Head of caudate nucleus (tissue), 42 donors: ENCODE measurements at regions of chr3 and their contacts with region 1.

Region 1: GRCh38 chr3:40452876-40453730 is 4.0 kb upstream of the RPL14 start:
- DNase-seq: peak; percentile 93 to 99 (median 98)

Region 2: DNA sequence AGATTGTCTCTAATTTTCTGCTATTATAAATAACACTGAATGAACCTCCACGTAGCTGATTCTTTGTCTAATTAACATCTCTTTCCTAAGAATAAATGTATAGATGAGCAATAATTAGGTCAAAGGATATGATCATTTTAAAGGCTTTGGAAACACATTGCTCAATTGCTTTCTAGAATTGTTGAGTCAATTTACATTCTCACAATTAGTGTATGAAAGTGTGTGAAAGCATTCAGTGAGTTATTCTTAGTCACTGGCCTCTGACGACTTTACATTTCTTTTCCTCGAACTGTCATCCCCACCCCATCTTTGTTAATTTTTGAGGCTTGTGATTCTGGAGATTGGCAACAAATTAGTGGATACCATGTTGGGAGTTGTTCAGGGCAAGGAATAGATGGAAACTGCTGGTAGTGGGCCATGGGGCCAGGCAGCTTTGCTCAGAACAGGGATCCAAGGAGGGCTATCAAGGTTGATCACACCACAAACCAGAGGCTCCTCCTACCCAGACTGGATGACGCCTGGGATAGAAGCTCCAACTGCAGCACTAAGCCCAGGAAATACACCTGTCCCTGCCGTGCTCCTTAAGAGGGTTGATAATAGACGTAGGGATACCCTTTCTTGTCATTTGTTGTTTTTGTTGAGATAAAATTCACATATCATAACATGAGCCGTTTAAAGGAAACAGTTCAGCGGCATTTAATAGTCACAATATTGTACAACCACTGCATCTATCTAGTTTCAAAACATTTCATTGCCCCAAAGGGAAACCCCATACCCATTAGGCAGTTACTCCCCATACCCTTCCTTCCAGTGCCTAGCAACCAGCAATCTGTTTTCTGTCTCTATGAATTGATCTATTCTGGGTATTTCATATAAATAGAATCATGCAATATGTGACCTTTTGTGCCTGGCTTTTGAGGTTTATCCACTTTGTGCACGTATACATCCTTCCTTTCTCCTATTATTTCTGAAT is 115.7 kb before region 1 on chr3:
- intact Hi-C with region 1: no loop called
- DNase-seq: no peak

Region 3: DNA sequence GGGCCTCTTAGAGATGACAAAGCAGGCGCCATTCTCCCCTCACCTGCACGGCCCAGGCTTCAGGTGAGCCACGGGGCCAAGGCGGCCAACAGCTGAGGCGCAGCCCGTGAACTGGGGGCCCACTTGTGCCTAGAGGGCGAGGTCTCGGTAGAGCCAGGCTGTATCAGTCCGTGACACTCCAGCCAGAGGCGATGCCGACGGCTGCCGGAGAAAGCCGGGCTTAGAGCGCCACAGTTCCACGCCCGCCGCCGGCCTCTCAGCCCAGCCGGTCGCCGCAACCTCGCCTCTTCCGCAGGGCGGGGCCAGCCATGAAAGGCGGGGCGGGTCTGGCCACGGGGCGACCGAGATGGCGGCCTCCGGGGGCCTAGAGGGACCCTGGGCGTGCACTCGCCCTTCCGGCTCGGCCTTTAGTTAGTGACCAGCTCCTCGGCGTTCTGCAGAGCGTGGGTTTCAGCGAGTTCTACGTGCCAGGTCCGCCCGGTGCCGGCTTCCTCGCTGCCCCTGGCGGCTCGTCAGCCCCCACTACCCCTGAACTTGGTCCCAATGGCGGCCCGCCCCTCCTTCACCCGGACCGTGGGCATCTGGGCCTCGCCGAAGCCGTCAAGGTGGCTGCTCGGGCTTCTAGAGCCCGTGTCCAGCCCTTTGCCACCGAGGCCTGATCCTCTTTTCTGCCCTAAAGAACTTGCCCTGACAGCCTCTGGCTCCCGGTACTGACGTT is 71.6 kb after region 1 on chr3 and contains the start of gene ZNF621:
- intact Hi-C with region 1: loop called (anchors 2 kb)
- DNase-seq: peak; percentile 70 to 96 (median 91)